AG04450 (cell line): ENCODE measurements at regions of chr11 and their contacts with region 1.

Region 1: DNA sequence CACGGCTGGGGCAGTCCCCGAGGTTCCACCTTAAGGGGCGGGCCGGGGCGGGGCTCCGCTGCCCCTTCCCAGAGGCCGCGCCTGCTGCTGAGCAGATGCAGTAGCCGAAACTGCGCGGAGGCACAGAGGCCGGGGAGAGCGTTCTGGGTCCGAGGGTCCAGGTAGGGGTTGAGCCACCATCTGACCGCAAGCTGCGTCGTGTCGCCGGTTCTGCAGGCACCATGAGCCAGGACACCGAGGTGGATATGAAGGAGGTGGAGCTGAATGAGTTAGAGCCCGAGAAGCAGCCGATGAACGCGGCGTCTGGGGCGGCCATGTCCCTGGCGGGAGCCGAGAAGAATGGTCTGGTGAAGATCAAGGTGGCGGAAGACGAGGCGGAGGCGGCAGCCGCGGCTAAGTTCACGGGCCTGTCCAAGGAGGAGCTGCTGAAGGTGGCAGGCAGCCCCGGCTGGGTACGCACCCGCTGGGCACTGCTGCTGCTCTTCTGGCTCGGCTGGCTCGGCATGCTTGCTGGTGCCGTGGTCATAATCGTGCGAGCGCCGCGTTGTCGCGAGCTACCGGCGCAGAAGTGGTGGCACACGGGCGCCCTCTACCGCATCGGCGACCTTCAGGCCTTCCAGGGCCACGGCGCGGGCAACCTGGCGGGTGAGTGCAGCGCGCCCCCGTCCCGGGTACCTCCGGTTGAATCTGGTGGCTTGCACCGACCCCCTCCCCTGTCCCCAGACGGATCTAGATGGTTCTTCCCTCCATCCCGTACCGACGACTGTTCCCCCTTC is at the start of gene SLC3A2:
- DNase-seq: peak; percentile 56
- H3K4me3 ChIP-seq: peak within 1 kb of the TSS; percentile 100
- H3K27ac ChIP-seq: peak within 1 kb of the TSS; percentile 99
- H3K27me3 ChIP-seq: no peaks in the 10 kb centered on the region
- CTCF ChIP-seq: peak; percentile 50; the same call in 1 of the 2 replicates
- polyA plus RNA-seq, gene SLC3A2: 263 and 284 TPM in 2 replicates

Region 2: GRCh38 chr11:62694455-62695167 is 186.4 kb before region 1 on chr11:
- CTCF ChIA-PET with region 1: no interaction called
- POLR2A ChIA-PET with region 1: no interaction called
- DNase-seq: peak; percentile 55
- H3K4me3 ChIP-seq: no peak overlapping the region
- H3K27ac ChIP-seq: no peak overlapping the region
- H3K27me3 ChIP-seq: no peaks in the 10 kb centered on the region
- CTCF ChIP-seq: peak; percentile 90

Region 3: GRCh38 chr11:62855571-62856332 is 25.2 kb before region 1 on chr11:
- CTCF ChIA-PET with region 1: interaction called, 4 read pairs
- POLR2A ChIA-PET with region 1: interaction called, 33 read pairs
- DNase-seq: peak; percentile 98
- H3K4me3 ChIP-seq: peak overlapping the region; percentile 96
- H3K27ac ChIP-seq: peak overlapping the region; percentile 91
- H3K27me3 ChIP-seq: no peaks in the 10 kb centered on the region
- CTCF ChIP-seq: no peak

Region 4: GRCh38 chr11:62860835-62861563 is 20.0 kb before region 1 on chr11:
- CTCF ChIA-PET with region 1: interaction called, 12 read pairs
- POLR2A ChIA-PET with region 1: interaction called, 33 read pairs
- DNase-seq: no peak
- H3K4me3 ChIP-seq: no peak overlapping the region
- H3K27ac ChIP-seq: no peak overlapping the region
- H3K27me3 ChIP-seq: no peaks in the 10 kb centered on the region
- CTCF ChIP-seq: no peak

Region 5: DNA sequence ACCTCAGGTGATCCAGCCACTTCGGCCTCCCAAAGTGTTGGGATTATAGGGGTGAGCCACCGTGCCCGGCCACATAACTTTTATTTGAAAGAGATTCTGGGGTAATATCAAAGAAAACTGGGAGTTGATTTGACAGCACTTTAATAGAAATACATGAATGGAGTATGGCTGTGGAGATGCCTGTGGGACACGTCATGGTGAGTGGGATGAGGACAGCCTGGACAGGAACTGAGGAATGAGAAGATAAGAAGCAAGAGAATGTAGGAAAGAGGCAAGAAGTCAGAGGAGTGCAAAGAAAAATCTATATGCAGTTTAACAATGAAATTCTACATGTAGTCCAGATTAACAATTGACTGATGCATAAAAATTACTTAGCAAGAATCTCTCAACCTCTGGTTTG is 72.8 kb after region 1 on chr11:
- CTCF ChIA-PET with region 1: no interaction called
- POLR2A ChIA-PET with region 1: no interaction called
- DNase-seq: no peak
- H3K4me3 ChIP-seq: no peak overlapping the region
- H3K27ac ChIP-seq: no peak overlapping the region
- H3K27me3 ChIP-seq: peaks cover 6% of the 10 kb centered on the region
- CTCF ChIP-seq: no peak